CD4-positive, alpha-beta T cell (primary cell): ENCODE measurements at regions of chr3 and their contacts with region 1.

Region 1: GRCh38 chr3:63993653-63994079 is 29.6 kb downstream of the PSMD6 start:
- DNase-seq: peak; percentile 33 to 81 (median 48)
- ATAC-seq: peak; percentile 87
- H3K4me3 ChIP-seq: no peak overlapping the region
- H3K4me3 Mint-ChIP-seq: peak overlapping the region; percentile 11
- H3K27ac ChIP-seq: no peak overlapping the region
- H3K27ac Mint-ChIP-seq: peak overlapping the region; percentile 83
- H3K4me1 ChIP-seq: peaks cover 14% of the 10 kb centered on the region
- H3K4me1 Mint-ChIP-seq: peaks cover 74% of the 10 kb centered on the region
- H3K27me3 ChIP-seq: no peaks in the 10 kb centered on the region
- H3K27me3 Mint-ChIP-seq: no peaks in the 10 kb centered on the region
- CTCF ChIP-seq: peak; percentile 95

Region 2: GRCh38 chr3:63933459-63933858 is 60.2 kb before region 1 on chr3:
- CTCF ChIA-PET with region 1: no interaction called
- POLR2A ChIA-PET with region 1: no interaction called
- intact Hi-C with region 1: no loop called
- DNase-seq: no peak
- ATAC-seq: no peak
- H3K4me3 ChIP-seq: no peak overlapping the region
- H3K4me3 Mint-ChIP-seq: no peak overlapping the region
- H3K27ac ChIP-seq: peak overlapping the region in 1 of 2 donors; percentile 24
- H3K27ac Mint-ChIP-seq: peak overlapping the region; percentile 53
- H3K4me1 ChIP-seq: peaks cover 19% of the 10 kb centered on the region
- H3K4me1 Mint-ChIP-seq: peaks cover 87% of the 10 kb centered on the region
- H3K27me3 ChIP-seq: no peaks in the 10 kb centered on the region
- H3K27me3 Mint-ChIP-seq: no peaks in the 10 kb centered on the region
- CTCF ChIP-seq: no peak

Region 3: GRCh38 chr3:63975723-63976122 is 17.9 kb before region 1 on chr3:
- CTCF ChIA-PET with region 1: interaction called, 16 read pairs
- POLR2A ChIA-PET with region 1: interaction called, 39 read pairs
- intact Hi-C with region 1: loop called in 1 of 2 experiments (anchors 2 kb)
- DNase-seq: no peak
- ATAC-seq: no peak
- H3K4me3 ChIP-seq: no peak overlapping the region
- H3K4me3 Mint-ChIP-seq: peak overlapping the region; percentile 54
- H3K27ac ChIP-seq: no peak overlapping the region
- H3K27ac Mint-ChIP-seq: peak overlapping the region; percentile 94
- H3K4me1 ChIP-seq: peaks cover 69% of the 10 kb centered on the region
- H3K4me1 Mint-ChIP-seq: peaks cover 97% of the 10 kb centered on the region
- H3K27me3 ChIP-seq: no peaks in the 10 kb centered on the region
- H3K27me3 Mint-ChIP-seq: no peaks in the 10 kb centered on the region
- CTCF ChIP-seq: no peak